Activated CD4-positive, alpha-beta memory T cell treated with anti-CD3 and anti-CD28 coated beads for 36 hours (primary cell): ENCODE measurements at regions of chr20 and their contacts with region 1.

Region 1: DNA sequence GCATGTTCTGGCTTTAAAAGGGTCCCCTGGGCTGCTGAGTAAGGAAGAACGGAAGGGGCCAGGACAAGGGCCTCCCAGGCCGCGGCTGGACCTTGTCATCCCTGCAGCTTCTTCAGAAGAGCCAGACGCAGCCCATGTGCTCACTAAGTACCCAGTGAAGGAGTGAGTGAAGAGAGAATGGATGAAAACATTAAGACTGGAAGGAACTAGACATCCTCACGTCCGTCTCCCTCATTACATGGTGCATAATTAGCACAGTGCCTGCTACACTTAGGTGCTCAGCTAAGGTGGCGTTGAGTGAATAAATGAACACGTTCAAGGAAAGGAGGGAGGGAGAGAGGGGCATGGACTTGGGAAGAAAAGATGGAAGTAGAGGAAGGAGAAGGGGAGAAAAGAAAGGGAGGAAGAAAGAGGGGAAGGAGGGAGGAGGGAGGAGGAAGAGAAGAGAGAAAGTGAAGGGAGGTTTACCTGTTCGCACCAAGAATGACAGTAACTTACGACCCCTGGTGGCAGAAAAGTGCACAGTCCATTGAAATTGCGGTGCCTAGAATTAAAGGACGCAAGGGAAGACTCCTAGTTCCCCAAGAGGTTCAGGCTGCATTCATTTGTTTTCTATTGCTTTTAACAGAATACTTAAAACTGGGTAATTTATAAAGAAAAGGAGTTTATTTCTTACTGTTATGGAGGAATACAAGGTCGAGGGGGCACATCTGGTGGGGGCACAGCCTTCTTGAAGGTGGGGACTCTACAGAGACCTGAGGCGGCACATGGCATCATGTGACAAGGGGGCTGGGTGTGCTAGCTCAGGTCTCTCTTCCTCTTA is 8.0 kb downstream of the TP53RK start:
- DNase-seq: peak; percentile 77
- H3K4me3 Mint-ChIP-seq: no peak overlapping the region
- H3K27ac Mint-ChIP-seq: no peak overlapping the region
- H3K4me1 Mint-ChIP-seq: peaks cover 28% of the 10 kb centered on the region
- H3K27me3 Mint-ChIP-seq: no peaks in the 10 kb centered on the region

Region 2: DNA sequence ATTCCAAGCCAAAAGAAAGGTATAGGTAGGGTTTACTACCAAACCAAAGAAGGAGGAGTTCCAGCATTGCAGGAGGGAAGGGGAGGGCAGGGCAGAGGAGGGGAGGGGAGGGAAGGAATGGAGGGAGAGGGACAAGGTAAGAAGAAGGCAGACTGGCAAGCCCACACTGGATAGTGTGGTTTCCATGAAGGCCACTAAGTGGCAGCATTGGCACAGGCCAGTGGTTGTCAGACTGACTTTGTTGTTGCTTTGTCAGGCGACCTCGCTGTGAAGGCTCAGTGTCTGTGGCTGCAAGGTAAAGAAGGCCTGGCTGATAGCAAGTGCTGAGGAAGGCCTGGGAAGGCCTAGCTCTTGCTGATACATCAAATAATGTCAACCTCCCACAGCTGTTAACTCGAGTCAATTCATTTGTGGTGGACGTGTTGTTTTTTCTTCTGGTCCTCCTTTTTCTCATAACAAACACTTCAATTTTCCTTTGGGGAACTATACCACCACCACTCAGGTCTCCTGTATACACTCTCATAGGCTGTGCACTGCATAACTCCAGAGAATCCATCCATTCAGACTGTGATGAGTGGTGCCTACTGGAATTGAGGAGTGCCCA is 160.2 kb before region 1 on chr20:
- CTCF ChIA-PET with region 1: interaction called, 103 read pairs
- POLR2A ChIA-PET with region 1: no interaction called
- intact Hi-C with region 1: loop called (anchors 1 kb)
- DNase-seq: peak; percentile 65
- H3K4me3 Mint-ChIP-seq: no peak overlapping the region
- H3K27ac Mint-ChIP-seq: no peak overlapping the region
- H3K4me1 Mint-ChIP-seq: no peaks in the 10 kb centered on the region
- H3K27me3 Mint-ChIP-seq: peaks cover 11% of the 10 kb centered on the region

Region 3: GRCh38 chr20:46545077-46545826 is 136.0 kb before region 1 on chr20:
- CTCF ChIA-PET with region 1: interaction called, 24 read pairs
- POLR2A ChIA-PET with region 1: no interaction called
- intact Hi-C with region 1: loop called (anchors 2 kb)
- DNase-seq: peak; percentile 80
- H3K4me3 Mint-ChIP-seq: peak overlapping the region; percentile 31
- H3K27ac Mint-ChIP-seq: peak overlapping the region; percentile 88
- H3K4me1 Mint-ChIP-seq: peaks cover 15% of the 10 kb centered on the region
- H3K27me3 Mint-ChIP-seq: peaks cover 4% of the 10 kb centered on the region

Region 4: GRCh38 chr20:46694494-46694893 is 13.3 kb after region 1 on chr20:
- CTCF ChIA-PET with region 1: interaction called, 10 read pairs
- POLR2A ChIA-PET with region 1: no interaction called
- intact Hi-C with region 1: no loop called
- DNase-seq: no peak
- H3K4me3 Mint-ChIP-seq: no peak overlapping the region
- H3K27ac Mint-ChIP-seq: no peak overlapping the region
- H3K4me1 Mint-ChIP-seq: peaks cover 8% of the 10 kb centered on the region
- H3K27me3 Mint-ChIP-seq: peaks cover 4% of the 10 kb centered on the region